ENCODE measurements at regions of chr15 and their contacts with region 1.

Region 1: DNA sequence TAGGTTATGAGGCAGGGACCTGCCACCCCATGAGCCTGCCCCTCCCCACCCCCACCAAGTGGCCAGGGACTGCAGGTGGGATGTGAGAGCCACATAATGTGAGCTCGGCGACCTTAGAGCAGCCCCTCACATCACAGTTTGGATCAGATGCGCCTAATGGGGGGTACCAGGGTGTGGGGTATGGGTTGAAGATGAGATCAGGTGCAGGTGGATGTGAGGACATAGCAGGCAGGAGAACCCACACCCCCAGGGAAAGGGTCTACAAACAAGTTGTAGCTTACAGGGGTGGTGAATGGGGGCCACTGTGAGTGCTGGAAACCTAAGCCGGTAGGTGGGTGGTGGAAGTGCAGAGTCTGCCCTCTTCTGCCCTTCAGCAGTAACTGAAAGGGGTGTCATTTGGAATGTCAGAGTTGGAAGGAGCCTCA is 94.0 kb downstream of the CORO2B start:
- DNase-seq: peak; percentile 54

Region 2: GRCh38 chr15:68441045-68441743 is 231.6 kb before region 1 on chr15:
- intact Hi-C with region 1: no loop called
- DNase-seq: no peak

Region 3: GRCh38 chr15:68559345-68560310 is 113.2 kb before region 1 on chr15:
- intact Hi-C with region 1: loop called (anchors 1 kb)
- DNase-seq: peak; percentile 93

Region 4: DNA sequence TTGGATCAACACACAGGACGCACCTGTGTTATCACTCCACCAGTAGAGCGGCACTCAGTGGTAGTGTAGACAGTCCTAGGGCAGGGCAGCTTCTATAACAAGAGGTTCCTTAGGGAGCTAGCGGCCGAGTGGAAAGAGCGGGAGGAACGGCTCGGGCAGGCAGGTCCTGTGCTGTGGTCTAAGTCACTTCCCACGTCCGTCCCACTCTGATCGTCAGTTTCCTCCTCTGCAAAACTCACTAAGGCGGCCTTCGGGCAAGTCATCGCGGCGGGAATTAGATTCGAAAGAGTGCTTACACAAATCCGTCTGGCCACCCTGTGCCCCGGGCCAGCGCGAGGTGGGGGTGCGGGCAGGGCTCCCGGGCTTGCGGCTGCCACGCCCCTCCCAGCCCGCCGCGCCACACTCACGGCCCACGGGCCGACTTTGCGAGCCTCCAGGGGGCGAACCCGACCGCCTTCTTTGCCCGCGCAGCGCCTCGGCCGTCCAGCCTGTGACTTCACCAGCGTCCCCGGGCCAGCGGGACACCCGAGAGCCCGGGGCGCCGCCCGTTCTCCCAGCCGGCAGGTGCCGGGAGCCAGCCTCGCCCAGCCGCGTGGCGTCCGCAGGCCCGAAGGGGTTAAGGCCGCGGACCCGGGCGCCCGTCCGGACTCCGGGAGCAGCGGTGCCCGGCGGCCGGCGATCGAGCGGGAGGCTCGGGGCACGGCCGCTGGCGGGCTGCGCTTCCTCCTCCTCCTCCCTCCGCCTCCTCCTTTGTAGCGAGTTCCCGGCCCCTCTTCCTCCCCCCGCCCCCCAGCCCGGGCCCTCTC is 94.4 kb before region 1 on chr15:
- intact Hi-C with region 1: loop called (anchors 5 kb)
- DNase-seq: peak; percentile 87

Region 5: DNA sequence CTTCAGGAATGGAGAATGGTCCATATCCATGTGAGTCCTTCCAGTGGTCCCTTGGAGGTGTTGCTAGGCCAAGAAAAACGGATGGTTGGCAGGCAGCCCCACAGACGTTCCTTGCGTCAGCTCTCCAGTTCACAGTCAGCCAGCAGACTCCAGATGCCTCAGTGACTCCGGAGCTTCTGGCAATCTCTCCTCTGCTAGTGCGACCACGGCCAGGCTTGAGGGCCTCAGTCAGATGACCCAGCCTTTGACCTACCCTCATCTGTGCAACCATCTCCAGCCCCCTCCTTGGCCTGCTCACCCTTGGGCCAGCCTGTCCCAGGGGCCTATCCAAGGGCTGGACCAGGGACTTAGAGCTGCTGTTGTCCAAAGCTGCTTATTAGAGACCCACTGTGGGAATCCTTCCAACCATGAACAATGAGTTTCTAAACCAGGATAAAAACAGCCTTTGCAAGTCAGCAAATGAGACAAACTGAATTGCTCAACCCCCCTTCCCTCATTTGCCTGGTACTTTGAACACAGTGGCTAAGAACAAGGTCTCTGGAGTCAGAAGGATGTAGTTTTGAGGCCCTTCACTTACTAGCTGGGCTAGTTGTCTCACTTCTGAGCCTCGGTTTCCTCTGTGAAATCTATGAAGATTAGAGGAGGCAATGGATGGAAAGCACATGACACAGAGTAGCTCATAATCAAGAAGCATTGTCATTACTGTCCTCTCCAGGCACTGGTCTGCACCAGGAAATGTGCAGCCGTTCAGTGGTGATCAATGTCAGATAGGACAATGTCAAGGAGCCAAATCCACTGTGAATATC is 103.1 kb after region 1 on chr15:
- intact Hi-C with region 1: loop called (anchors 5 kb)
- DNase-seq: peak; percentile 89

Region 6: DNA sequence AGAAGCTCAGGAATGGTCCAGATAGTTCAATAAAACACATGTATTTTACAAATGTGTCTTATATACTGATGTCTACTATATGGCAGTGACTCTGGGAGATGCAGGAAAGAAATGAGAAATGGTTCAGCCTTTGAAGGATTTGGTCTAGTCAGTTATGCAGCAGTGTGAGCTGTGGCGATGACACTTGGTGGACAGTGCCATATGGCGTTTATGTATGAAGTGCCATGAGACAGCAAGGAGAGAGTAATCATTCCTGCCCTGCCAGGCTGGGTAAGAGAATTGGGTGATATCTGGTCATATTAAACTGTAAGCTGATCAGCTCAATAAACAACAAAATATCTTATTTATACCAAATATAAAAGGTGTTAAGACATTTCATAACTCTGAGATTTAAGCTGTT is 195.5 kb after region 1 on chr15:
- intact Hi-C with region 1: no loop called
- DNase-seq: no peak

Measured in cardiac septum (tissue), 1 donor.